GM13977 (cell line): ENCODE measurements at regions of chr4 and their contacts with region 1.

Region 1: GRCh38 chr4:102620697-102621497 is 119.7 kb downstream of the NFKB1 start:
- DNase-seq: peak; percentile 32
- CTCF ChIP-seq: peak; percentile 38

Region 2: GRCh38 chr4:102321260-102321995 is 299.5 kb before region 1 on chr4:
- in situ Hi-C with region 1: no loop called
- DNase-seq: peak; percentile 24
- CTCF ChIP-seq: no peak

Region 3: GRCh38 chr4:102449751-102450352 is 171.0 kb before region 1 on chr4:
- in situ Hi-C with region 1: loop called (anchors 10 kb)
- DNase-seq: peak; percentile 58
- CTCF ChIP-seq: peak; percentile 66

Region 4: GRCh38 chr4:103008875-103009729 is 388.2 kb after region 1 on chr4:
- in situ Hi-C with region 1: loop called (anchors 10 kb)
- DNase-seq: peak; percentile 44
- CTCF ChIP-seq: peak; percentile 61